ENCODE measurements at regions of chr17 and their contacts with region 1.

Region 1: DNA sequence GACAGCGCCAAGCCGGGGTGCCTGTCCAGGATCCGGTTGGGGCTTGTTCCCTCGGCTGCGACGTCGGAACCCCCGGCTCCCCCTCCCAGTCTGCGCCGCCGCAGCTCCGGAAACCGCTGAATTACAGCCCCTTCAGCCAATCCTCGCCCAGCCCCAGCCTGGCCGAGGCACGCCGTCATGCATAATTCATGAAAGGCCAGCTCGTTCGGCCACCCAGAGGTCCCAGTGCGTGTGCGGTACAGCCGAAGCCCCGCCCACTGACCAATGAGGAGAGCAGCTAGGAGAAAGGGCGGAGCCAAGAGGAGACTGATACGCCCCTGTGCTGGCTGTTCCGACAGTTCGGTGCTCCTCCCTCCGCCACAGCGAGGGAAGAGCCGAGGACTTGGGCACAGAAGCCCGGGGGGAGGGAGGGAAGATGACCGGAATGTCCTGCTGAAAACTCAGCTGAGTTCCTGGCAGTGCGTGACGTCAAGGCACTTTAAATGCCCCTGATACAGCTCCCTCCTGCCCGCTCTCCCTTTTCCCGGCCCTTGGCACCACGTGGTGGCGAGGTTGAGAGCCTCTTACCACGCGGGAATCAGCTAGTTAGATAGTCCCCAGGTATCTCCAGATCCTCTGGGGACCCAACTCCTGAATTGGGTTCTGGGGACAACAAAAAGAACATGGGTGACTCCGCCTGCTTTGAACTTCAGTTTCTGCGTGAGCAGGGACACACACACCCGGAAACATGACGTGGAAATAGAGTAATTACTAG is at the start of gene STAT3:
- DNase-seq: peak; percentile 100
- H3K4me3 ChIP-seq: peak within 1 kb of the TSS; percentile 94
- H3K4me3 Mint-ChIP-seq: peak within 1 kb of the TSS; percentile 88 to 99 (median 94)
- H3K27ac ChIP-seq: peak within 1 kb of the TSS; percentile 100
- H3K27ac Mint-ChIP-seq: peak within 1 kb of the TSS; percentile 99 to 100 (median 100)
- H3K4me1 ChIP-seq: peaks cover 33% of the 10 kb centered on the region
- H3K4me1 Mint-ChIP-seq: peaks cover 31 to 59% (median 40%) of the 10 kb centered on the region in 3 donors
- H3K27me3 ChIP-seq: no peaks in the 10 kb centered on the region
- H3K27me3 Mint-ChIP-seq: no peaks in the 10 kb centered on the region
- total RNA-seq, gene STAT3: 148 to 155 TPM

Region 2: GRCh38 chr17:42287926-42288802 is 100.4 kb before region 1 on chr17 and contains the start of gene STAT5A:
- CTCF ChIA-PET with region 1: interaction called, 3 read pairs
- POLR2A ChIA-PET with region 1: interaction called, 13 read pairs
- DNase-seq: peak; percentile 72 to 91 (median 83)
- H3K4me3 ChIP-seq: peak within 1 kb of the TSS; percentile 65
- H3K4me3 Mint-ChIP-seq: peak within 1 kb of the TSS; percentile 93 to 97 (median 96)
- H3K27ac ChIP-seq: peak within 1 kb of the TSS; percentile 88
- H3K27ac Mint-ChIP-seq: peak within 1 kb of the TSS; percentile 95 to 99 (median 99)
- H3K4me1 ChIP-seq: peaks cover 30% of the 10 kb centered on the region
- H3K4me1 Mint-ChIP-seq: peaks cover 42 to 67% (median 52%) of the 10 kb centered on the region in 3 donors
- H3K27me3 ChIP-seq: no peaks in the 10 kb centered on the region
- H3K27me3 Mint-ChIP-seq: no peaks in the 10 kb centered on the region
- total RNA-seq, gene STAT5A: 259 to 263 TPM

Region 3: DNA sequence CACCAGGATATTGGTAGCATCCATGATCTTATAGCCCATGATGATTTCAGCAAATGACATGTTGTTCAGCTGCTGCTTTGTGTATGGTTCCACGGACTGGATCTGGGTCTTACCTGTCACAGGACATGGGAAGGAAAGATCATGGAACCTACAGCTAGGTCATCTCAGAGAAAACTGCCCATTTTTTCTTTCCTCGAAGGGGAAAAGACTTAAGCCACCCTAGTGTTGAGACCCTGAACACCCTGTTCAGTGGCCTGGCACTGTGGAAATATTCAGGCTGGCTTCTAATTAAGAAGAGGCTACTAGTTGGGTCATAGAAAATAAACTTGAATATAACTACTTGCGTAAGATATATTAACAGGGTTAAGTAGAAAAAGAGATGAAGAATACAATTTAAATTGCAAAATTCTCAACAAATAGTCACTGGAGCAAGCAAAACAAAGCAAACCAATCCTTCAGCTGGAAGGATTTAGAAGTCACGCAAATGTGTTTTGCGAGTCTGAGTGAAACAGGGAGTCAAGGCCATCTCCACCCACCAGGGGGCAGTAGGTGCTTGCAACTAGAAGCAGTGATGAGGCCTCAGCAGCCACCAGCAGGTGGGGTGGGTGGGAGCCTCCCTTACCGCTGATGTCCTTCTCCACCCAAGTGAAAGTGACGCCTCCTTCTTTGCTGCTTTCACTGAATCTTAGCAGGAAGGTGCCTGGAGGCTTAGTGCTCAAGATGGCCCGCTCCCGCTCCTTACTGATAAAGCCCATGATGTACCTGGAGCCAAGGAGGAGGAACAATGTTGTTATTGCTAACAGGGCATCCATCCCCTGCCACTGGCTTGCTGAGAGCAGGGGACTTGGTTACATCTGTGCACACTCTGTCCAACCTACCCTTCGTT is 65.9 kb before region 1 on chr17:
- CTCF ChIA-PET with region 1: interaction called, 13 read pairs
- POLR2A ChIA-PET with region 1: interaction called, 3 read pairs
- DNase-seq: peak; percentile 87 to 96 (median 92)
- H3K4me3 ChIP-seq: no peak overlapping the region
- H3K4me3 Mint-ChIP-seq: no peak overlapping the region
- H3K27ac ChIP-seq: no peak overlapping the region
- H3K27ac Mint-ChIP-seq: peak overlapping the region; percentile 22 to 96 (median 69)
- H3K4me1 ChIP-seq: peaks cover 26% of the 10 kb centered on the region
- H3K4me1 Mint-ChIP-seq: peaks cover 25 to 31% (median 26%) of the 10 kb centered on the region in 3 donors
- H3K27me3 ChIP-seq: no peaks in the 10 kb centered on the region
- H3K27me3 Mint-ChIP-seq: no peaks in the 10 kb centered on the region

Region 4: DNA sequence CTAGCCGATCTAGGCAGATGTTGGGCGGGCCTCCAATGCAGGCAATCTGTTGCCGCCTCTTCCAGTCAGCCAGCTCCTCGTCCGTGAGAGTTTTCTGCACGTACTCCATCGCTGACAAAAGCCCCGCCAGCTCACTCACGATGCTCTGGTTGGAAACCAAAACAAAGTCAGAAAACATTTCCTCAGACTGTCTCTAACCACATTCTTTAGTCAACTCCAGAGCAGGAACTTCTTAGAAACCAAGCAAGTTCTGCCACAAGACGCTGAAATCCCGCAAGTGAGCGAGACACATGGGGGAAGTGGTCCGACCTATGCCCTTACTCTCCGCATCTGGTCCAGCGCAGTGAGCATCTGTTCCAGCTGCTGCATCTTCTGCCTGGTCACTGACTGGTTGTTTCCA is 51.1 kb before region 1 on chr17:
- CTCF ChIA-PET with region 1: interaction called, 4 read pairs
- POLR2A ChIA-PET with region 1: interaction called, 12 read pairs
- DNase-seq: peak in 4 of 5 donors; percentile 30 to 81 (median 71)
- H3K4me3 ChIP-seq: no peak overlapping the region
- H3K4me3 Mint-ChIP-seq: peak overlapping the region; percentile 5 to 83 (median 68)
- H3K27ac ChIP-seq: no peak overlapping the region
- H3K27ac Mint-ChIP-seq: peak overlapping the region; percentile 83 to 98 (median 93)
- H3K4me1 ChIP-seq: peaks cover 35% of the 10 kb centered on the region
- H3K4me1 Mint-ChIP-seq: peaks cover 31 to 46% (median 43%) of the 10 kb centered on the region in 3 donors
- H3K27me3 ChIP-seq: no peaks in the 10 kb centered on the region
- H3K27me3 Mint-ChIP-seq: no peaks in the 10 kb centered on the region